Right ventricle myocardium superior (tissue), 1 donor: ENCODE measurements at regions of chr6 and their contacts with region 1.

Region 1: GRCh38 chr6:63635588-63636517 is at the start of gene PHF3:
- DNase-seq: peak; percentile 95
- ATAC-seq: peak; percentile 97
- total RNA-seq, gene PHF3: 34.2 TPM

Region 2: GRCh38 chr6:63307581-63308246 is 328.1 kb before region 1 on chr6:
- intact Hi-C with region 1: no loop called
- DNase-seq: no peak
- ATAC-seq: peak; percentile 64

Region 3: GRCh38 chr6:63571881-63572732 is 63.7 kb before region 1 on chr6 and contains the starts of genes LOC128125822 and PTP4A1:
- intact Hi-C with region 1: loop called (anchors 5 kb)
- DNase-seq: peak; percentile 98
- ATAC-seq: peak; percentile 98
- total RNA-seq, gene PTP4A1: 33.7 TPM

Region 4: GRCh38 chr6:63732336-63732735 is 96.5 kb after region 1 on chr6:
- intact Hi-C with region 1: no loop called
- DNase-seq: no peak
- ATAC-seq: no peak